Panc1 (cell line): ENCODE measurements at regions of chr17 and their contacts with region 1.

Region 1: DNA sequence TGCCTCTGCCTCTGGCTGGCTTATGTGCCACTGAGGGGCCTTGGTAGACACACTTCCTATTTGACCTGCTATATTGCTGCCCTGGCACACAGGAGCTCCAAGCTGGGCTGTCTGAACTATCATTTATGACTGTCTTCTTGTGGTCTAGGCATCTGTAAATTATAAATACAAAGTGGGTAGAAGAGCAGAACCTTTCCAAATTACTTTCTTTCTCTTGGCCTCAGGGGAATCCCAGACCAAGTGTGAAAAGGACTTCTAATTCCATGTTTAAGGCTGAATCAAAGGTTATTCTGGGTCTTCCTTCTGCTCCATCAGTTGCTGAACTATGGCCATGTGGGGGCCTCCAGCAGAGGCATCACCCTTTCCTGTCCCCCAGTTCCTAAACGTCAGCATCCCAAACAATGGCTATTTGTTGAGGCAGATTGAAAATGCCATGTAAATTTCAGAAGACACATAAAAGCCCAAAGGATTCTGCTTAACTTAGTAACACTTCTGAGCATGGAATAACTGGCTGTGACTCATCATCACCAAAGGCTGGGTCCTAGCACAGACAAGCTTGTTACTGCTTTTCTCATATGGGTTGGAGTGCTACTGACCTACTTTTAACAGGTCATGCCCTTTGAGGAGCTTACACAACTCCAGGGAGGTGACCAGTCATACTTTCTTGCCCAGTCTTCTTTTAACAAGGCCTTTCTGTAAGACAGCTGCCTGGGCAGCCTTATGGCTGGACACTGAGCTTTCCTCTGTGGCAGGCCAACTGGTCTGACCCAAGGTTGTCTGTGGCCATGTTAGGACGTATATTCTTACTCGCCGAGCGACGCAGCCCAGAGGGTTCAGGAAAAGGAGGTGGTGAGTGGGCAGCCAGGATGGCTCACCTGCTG is 154.8 kb downstream of the VPS53 start:
- DNase-seq: peak; percentile 4
- ATAC-seq: no peak
- H3K4me3 ChIP-seq: no peak overlapping the region
- H3K27ac ChIP-seq: no peak overlapping the region
- H3K4me1 ChIP-seq: no peaks in the 10 kb centered on the region
- H3K27me3 ChIP-seq: no peaks in the 10 kb centered on the region
- CTCF ChIP-seq: no peak

Region 2: GRCh38 chr17:614653-615473 is 55.1 kb after region 1 on chr17:
- CTCF ChIA-PET with region 1: no interaction called
- POLR2A ChIA-PET with region 1: no interaction called
- in situ Hi-C with region 1: no loop called
- intact Hi-C with region 1: no loop called
- DNase-seq: no peak
- ATAC-seq: no peak
- H3K4me3 ChIP-seq: no peak overlapping the region
- H3K27ac ChIP-seq: no peak overlapping the region
- H3K4me1 ChIP-seq: no peaks in the 10 kb centered on the region
- H3K27me3 ChIP-seq: no peaks in the 10 kb centered on the region
- CTCF ChIP-seq: no peak

Region 3: DNA sequence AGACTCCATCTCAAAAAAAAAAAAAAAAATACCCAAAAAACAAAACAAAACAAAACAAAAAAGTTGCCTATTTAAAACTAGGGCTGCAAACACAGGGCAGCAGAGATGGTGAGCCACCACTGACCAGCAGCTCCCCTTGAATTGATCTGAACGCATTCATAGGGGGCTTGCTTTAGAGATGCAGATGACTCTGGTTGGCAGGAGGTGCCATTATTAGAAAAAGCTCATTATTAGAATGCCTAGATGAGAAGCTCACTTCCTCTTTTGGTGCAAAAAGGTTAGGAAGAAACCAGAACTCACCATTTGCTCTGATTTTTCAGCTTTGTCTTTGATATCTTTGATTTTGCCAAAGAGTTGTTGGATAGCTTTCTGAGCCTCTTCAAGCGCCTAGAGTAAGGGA is 101.7 kb after region 1 on chr17:
- CTCF ChIA-PET with region 1: no interaction called
- POLR2A ChIA-PET with region 1: no interaction called
- in situ Hi-C with region 1: no loop called
- intact Hi-C with region 1: no loop called
- DNase-seq: no peak
- ATAC-seq: no peak
- H3K4me3 ChIP-seq: no peak overlapping the region
- H3K27ac ChIP-seq: no peak overlapping the region
- H3K4me1 ChIP-seq: no peaks in the 10 kb centered on the region
- H3K27me3 ChIP-seq: no peaks in the 10 kb centered on the region
- CTCF ChIP-seq: no peak

Region 4: DNA sequence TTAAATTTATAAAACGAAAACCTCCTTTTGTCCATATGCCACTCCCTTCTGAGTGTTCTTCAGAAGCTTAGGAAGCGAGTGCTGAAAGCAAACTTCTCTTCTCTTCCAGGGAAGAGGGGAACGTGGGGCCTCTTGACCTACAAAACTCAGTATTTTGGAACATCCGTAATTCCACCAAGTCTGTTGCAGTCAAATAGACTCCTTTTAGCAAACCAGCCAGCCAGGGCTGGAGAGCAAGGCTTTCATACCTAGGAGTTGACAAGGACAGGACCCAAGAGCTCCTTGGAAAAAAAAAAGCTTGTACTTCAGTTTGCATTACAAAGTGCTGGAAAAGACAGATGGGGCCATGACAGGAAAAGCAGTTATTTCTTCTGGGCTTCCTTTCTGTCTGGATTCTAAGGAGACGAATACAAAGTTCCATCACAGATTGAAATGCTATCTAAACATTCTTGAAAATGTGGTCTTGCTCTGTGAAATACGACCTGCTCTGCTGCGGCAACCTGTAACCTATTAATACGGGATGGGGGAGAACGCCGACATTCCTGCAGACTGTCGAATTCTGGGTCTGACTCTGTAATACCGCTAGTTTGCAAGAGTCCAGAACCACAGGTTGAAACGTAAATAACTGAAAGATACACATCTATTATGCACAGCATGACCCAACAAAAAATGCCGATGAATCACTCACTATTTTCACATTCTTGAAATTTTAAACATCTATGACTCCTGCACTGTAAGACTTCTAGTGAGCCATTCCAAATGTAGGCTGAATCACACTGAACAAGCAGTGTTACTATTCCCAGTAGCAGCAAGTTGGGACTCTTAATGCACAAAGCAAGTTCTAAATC is 134.2 kb after region 1 on chr17:
- CTCF ChIA-PET with region 1: no interaction called
- POLR2A ChIA-PET with region 1: no interaction called
- in situ Hi-C with region 1: loop called (anchors 10 kb)
- intact Hi-C with region 1: no loop called
- DNase-seq: peak; percentile 91
- ATAC-seq: peak; percentile 91
- H3K4me3 ChIP-seq: no peak overlapping the region
- H3K27ac ChIP-seq: 0 out of 2 replicates have a peak overlapping the region, but pooled peaks have one; percentile 21
- H3K4me1 ChIP-seq: peaks cover 12% of the 10 kb centered on the region; the same call in 1 of the 2 replicates
- H3K27me3 ChIP-seq: no peaks in the 10 kb centered on the region
- CTCF ChIP-seq: no peak